ENCODE measurements at regions of chr1 and their contacts with region 1.

Region 1: DNA sequence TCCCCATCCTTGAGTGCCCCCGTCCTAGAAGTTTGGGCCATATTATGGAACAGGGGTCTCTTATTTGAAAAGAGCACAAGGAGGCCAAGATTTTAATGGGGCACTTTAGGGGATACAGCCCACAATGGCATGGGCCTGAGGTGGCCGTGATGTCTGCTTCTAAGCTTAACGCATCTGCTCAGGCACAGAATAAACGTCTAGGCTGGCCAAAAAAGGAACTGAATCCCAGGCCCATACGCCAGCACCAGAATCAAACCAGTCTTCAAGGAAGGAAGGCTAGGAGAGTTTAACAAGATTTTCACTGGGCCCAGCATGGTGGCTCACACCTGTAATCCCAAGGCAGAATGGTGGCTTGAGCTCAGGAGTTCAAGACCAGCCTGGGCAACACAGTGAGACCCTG is 9.2 kb upstream of the SARS1 start:
- DNase-seq: peak in 2 of 3 donors; percentile 27 to 28
- H3K4me3 ChIP-seq: no peak overlapping the region
- H3K27ac ChIP-seq: no peak overlapping the region
- H3K4me1 ChIP-seq: peaks cover 3 to 16% (median 10%) of the 10 kb centered on the region in 4 experiments
- H3K27me3 ChIP-seq: peaks cover 0 to 88% (median 39%) of the 10 kb centered on the region in 5 experiments

Region 2: DNA sequence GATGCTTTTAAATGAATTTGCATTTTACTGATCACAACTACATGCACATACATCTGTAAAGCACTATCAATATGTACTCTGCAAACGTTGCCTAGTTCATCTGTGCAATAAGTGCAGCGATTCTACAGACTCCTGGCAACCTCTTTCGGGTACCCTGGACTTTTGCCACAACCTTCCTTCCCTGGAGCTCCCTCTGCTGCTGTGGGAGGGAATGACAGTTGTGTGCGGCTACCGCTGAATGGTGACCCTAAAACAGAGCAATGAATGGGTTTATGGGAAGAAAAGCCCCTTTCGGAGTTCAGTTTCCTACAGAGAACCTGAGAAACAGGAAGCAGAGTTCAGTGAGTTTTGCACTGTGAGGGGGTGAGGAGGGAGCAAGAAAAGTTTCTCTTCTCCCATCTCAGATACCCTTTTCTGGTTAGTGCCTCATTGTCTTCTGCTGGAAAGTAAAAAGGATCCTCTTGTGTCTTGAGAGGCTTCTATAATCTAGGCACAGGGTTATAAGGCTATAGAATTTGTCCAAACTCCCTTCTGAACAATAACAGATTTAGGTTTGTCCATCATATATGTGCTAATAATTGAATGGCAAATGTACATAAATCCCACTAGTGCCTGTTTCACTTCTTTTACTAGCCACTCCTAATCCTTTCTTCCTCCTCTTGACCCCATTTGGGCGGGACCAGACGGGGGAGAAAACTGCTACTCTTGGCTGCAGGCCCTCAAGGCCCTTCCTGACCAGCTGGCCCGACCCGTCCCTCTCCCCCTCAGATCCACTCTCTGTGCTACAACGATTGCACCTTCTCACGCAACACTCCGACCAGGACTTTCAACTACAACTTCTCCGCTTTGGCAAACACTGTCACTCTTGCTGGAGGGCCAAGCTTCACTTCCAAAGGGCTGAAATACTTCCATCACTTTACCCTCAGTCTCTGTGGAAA is 10.6 kb before region 1 on chr1:
- CTCF ChIA-PET with region 1: interaction called, 19 read pairs
- POLR2A ChIA-PET with region 1: no interaction called
- DNase-seq: peak; percentile 51 to 77 (median 69)
- H3K4me3 ChIP-seq: no peak overlapping the region
- H3K27ac ChIP-seq: no peak overlapping the region
- H3K4me1 ChIP-seq: no peaks in the 10 kb centered on the region
- H3K27me3 ChIP-seq: peaks cover 0 to 84% (median 34%) of the 10 kb centered on the region in 5 experiments

Measured in common myeloid progenitor, CD34-positive (primary cell).